Left ventricle myocardium inferior (tissue), 1 donor: ENCODE measurements at regions of chr10 and their contacts with region 1.

Region 1: GRCh38 chr10:23525406-23525805 is 86.5 kb downstream of the OTUD1 start:
- DNase-seq: no peak
- H3K4me3 ChIP-seq: no peak overlapping the region
- H3K27ac ChIP-seq: no peak overlapping the region
- H3K4me1 ChIP-seq: no peaks in the 10 kb centered on the region
- H3K27me3 ChIP-seq: peaks cover under 1% of the 10 kb centered on the region
- CTCF ChIP-seq: peak; percentile 68

Region 2: DNA sequence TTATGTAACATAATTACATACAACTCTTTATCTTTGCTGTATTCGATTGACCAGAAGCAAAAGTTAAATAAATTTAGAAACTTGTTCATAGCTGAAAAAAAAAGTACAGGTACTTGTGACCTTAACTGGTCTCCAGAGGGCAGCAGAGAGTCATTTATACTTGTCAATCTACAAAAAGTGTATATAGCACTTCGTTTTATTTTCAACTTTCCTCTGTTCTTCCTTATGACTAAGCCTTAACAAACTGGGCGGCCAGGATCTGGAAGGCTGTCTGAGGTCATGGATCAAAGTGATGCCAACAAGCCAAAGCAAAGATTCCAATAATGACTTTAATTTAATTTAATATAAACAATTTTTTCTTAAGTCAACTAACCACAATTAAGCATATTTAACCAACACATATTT is 210.6 kb before region 1 on chr10:
- intact Hi-C with region 1: loop called (anchors 5 kb)
- DNase-seq: no peak
- H3K4me3 ChIP-seq: no peak overlapping the region
- H3K27ac ChIP-seq: no peak overlapping the region
- H3K4me1 ChIP-seq: peaks cover 9% of the 10 kb centered on the region
- H3K27me3 ChIP-seq: no peaks in the 10 kb centered on the region
- CTCF ChIP-seq: peak; percentile 83

Region 3: DNA sequence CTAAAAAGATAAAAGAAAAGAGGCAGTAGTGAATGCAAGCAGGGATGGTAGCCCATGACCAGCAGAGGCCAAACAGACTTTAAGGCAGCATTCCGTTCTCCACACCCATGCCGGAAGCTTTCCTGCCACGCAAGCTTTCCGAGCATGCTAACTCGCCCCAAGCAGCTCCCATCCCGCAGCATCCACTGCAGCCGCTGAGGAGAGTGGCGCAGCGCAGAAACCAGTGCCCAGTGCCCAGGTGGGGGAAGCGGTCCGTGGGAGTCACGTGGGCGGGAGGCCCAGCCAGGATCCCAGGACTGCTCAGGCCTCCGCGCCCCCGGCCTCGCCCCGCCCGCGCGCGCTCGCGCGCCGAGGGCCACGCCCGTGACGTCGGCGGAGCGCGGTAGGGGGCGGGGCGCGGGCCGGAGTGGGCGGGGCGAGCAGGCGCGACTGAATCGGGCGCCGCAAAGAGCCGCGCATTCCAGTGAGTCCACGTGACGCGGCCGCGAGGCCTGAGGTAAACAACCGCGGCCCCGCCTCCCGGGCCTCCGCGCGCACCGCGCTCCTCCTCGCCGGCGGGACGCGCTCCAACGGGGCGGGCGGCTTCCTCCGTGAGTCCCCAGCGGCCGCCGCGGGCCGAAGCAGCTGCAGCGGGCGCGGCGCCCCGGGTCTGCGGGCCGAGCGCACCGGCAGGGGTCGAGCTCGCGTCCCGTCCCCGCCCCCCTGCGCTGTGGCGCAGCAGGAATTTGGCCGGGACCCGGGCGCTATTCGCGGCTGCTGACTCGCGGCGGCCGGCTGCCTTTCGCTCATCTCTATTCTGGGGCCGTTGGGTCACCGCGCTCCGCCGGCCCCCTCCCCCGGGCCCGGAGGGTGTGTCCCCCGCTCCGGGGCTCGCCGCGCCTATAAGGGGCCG is 86.6 kb before region 1 on chr10 and contains the start of gene OTUD1:
- intact Hi-C with region 1: no loop called
- DNase-seq: peak; percentile 97
- H3K4me3 ChIP-seq: peak within 1 kb of the TSS; percentile 87
- H3K27ac ChIP-seq: peak within 1 kb of the TSS; percentile 99
- H3K4me1 ChIP-seq: peaks cover 50% of the 10 kb centered on the region
- H3K27me3 ChIP-seq: no peaks in the 10 kb centered on the region
- CTCF ChIP-seq: peak; percentile 35
- total RNA-seq, gene OTUD1: 19.5 TPM